ENCODE measurements at regions of chr11 and their contacts with region 1.

Region 1: GRCh38 chr11:47656260-47656885 is 14.0 kb upstream of the MTCH2 start:
- DNase-seq: no peak
- ATAC-seq: no peak

Region 2: GRCh38 chr11:47705721-47706120 is 49.3 kb after region 1 on chr11:
- intact Hi-C with region 1: loop called in 1 of 2 experiments (anchors 10 kb)
- DNase-seq: no peak
- ATAC-seq: no peak

Measured in left colon (tissue), 2 donors.